ENCODE measurements at regions of chr11 and their contacts with region 1.

Region 1: GRCh38 chr11:14454861-14455632 is 44.6 kb downstream of the COPB1 start:
- DNase-seq: no peak
- ATAC-seq: peak; percentile 47
- H3K4me3 Mint-ChIP-seq: no peak overlapping the region
- H3K27ac Mint-ChIP-seq: peak overlapping the region; percentile 20
- H3K4me1 Mint-ChIP-seq: peaks cover 7% of the 10 kb centered on the region
- H3K27me3 Mint-ChIP-seq: no peaks in the 10 kb centered on the region
- CTCF ChIP-seq: peak; percentile 83

Region 2: GRCh38 chr11:14300661-14301304 is 154.3 kb before region 1 on chr11:
- CTCF ChIA-PET with region 1: interaction called, 128 read pairs
- POLR2A ChIA-PET with region 1: interaction called, 3 read pairs
- intact Hi-C with region 1: loop called (anchors 2 kb)
- DNase-seq: peak; percentile 71
- ATAC-seq: peak; percentile 95
- H3K4me3 Mint-ChIP-seq: no peak overlapping the region
- H3K27ac Mint-ChIP-seq: no peak overlapping the region
- H3K4me1 Mint-ChIP-seq: peaks cover 23% of the 10 kb centered on the region
- H3K27me3 Mint-ChIP-seq: no peaks in the 10 kb centered on the region
- CTCF ChIP-seq: peak; percentile 69

Region 3: DNA sequence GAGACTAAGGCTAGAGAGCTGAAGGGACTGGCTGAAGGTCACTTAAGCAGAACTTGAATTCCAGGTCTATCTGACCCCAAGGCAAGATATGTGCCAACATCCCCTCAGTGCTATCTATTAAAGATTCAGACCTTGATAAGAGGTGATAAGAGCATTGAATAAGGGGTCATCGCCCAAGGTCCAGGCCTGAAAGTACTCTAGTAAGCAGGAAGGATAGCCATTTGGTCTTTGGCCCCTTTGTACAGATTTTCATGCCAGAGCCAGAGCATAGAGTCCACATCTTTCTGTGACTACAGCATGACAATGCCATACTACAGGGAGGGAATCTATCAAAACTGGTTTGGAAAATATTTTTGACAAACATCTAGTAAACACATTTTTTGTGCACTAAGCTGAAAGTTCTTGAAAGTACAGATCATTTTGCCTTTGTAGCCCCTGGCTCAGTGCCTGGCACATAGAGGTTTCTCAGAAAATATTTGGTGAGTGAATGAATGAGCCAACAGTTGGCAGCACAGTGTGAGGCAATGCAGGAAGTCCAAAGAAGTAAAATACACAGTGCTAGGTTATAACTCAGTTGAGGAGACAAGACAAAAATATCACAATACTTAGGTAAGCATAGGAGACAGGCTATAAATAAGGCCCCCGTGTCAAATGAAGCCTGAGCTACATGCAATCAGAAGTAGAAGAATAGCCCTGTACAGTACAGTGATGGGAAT is 81.0 kb before region 1 on chr11:
- CTCF ChIA-PET with region 1: interaction called, 13 read pairs
- POLR2A ChIA-PET with region 1: no interaction called
- intact Hi-C with region 1: loop called (anchors 10 kb)
- DNase-seq: no peak
- ATAC-seq: peak; percentile 17
- H3K4me3 Mint-ChIP-seq: no peak overlapping the region
- H3K27ac Mint-ChIP-seq: peak overlapping the region; percentile 21
- H3K4me1 Mint-ChIP-seq: peaks cover 63% of the 10 kb centered on the region
- H3K27me3 Mint-ChIP-seq: peaks cover 3% of the 10 kb centered on the region
- CTCF ChIP-seq: no peak

Region 4: DNA sequence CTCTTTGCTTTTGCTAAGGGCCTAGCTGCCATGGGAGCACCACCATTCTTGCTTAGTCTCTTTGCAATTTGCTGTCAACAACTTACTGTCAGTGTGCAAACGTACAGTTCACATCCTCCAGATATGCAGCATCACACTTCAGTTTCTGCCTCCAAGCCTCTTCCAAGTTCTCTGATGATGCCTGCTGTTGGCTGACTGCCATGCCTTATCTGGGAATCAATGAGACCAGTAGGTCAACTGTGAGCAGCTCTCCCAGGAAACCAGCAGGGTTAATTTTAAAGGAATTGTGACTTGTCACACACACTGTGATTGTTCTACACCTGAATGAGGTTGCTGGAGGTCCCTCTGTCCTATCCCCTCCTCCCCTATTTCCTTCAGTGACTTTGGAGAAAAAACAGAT is 11.4 kb before region 1 on chr11:
- CTCF ChIA-PET with region 1: interaction called, 16 read pairs
- POLR2A ChIA-PET with region 1: no interaction called
- intact Hi-C with region 1: no loop called
- DNase-seq: no peak
- ATAC-seq: no peak
- H3K4me3 Mint-ChIP-seq: no peak overlapping the region
- H3K27ac Mint-ChIP-seq: no peak overlapping the region
- H3K4me1 Mint-ChIP-seq: peaks cover 56% of the 10 kb centered on the region
- H3K27me3 Mint-ChIP-seq: no peaks in the 10 kb centered on the region
- CTCF ChIP-seq: no peak

Region 5: GRCh38 chr11:14480716-14481115 is 25.7 kb after region 1 on chr11:
- CTCF ChIA-PET with region 1: interaction called, 10 read pairs
- POLR2A ChIA-PET with region 1: no interaction called
- intact Hi-C with region 1: no loop called
- DNase-seq: no peak
- ATAC-seq: no peak
- H3K4me3 Mint-ChIP-seq: peak overlapping the region; percentile 23
- H3K27ac Mint-ChIP-seq: peak overlapping the region; percentile 81
- H3K4me1 Mint-ChIP-seq: peaks cover 19% of the 10 kb centered on the region
- H3K27me3 Mint-ChIP-seq: no peaks in the 10 kb centered on the region
- CTCF ChIP-seq: no peak